SK-N-SH (cell line): ENCODE measurements at regions of chr2 and their contacts with region 1.

Region 1: DNA sequence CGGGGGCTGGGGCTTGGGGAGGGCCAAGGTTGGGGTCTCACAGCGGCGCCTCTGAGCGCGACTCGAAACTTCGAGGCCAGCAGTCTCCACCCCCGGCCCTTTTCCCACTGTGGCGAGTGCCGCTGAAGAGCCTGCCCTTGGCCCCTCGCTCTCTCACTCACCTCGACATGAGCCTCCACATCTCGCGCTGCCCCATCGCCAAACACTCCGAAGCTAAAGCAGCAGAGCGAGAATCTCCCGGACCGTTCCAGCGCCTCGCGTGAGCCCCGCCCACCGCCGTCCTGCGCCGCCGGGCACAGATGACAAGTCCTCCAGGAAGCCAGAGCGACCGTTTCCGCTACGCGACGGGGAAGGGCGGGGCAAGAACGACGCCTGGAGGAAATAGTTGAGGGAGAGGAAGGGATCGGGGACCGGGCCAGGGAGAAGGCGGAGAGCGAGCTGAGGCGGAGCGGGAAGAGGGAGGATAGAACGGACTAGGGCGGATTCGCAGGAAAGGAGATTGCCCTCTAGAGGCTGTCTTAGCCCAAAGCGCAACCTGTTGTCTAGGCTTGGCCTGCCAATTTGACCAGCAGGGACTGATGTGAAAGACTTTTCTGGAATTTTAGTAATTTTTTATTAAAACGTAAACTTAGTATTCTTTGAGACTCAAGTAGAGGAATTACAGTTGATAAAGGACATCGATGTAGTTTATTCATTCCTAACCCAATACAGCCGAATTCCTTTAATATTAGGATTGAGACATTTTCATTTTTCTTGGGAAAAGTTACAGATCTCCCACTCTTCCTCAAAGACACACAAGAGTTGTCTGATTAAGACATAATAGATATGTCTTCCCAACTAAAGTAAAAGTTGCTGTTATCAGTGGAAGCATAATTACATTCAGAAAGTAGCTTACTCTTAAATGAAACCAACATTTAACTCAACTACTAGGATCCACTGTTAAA is at the start of gene HIBCH:
- DNase-seq: peak; percentile 90
- H3K4me3 ChIP-seq: peak within 1 kb of the TSS; percentile 80 to 82
- H3K27ac ChIP-seq: peak within 1 kb of the TSS; percentile 55 to 86
- H3K4me1 ChIP-seq: peaks cover 0 to 7% of the 10 kb centered on the region in 2 experiments; a peak in 2 of 4 replicates
- H3K27me3 ChIP-seq: no peaks in the 10 kb centered on the region
- CTCF ChIP-seq: peak; percentile 87
- EP300 ChIP-seq: peak in 1 of 2 experiments; percentile 56; a peak in 2 of 4 replicates
- RAD21 ChIP-seq: peak; percentile 42
- polyA plus RNA-seq, gene HIBCH: 8.4 and 12.2 TPM in 2 replicates

Region 2: DNA sequence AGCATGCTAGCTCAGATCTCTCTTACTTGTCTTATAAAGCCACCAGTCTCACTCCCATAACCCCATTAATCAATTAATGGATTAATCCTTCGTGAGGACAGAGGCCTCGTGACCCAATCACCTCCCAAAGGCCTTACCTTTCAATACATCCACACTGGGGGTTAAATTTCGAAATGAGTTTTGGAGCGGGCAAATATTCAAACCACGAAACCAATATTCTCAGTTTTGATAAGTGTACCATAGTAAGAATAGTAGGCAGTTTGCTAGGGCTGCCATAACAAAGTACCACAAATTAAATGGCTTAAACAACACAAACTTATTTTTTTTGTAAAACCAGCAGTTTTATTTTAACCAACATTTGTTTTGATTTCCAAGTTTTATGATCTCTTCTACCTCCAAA is 15.4 kb before region 1 on chr2:
- CTCF ChIA-PET with region 1: interaction called, 15 read pairs
- POLR2A ChIA-PET with region 1: no interaction called
- DNase-seq: no peak
- H3K4me3 ChIP-seq: no peak overlapping the region
- H3K27ac ChIP-seq: no peak overlapping the region
- H3K4me1 ChIP-seq: no peaks in the 10 kb centered on the region
- H3K27me3 ChIP-seq: no peaks in the 10 kb centered on the region
- CTCF ChIP-seq: no peak
- EP300 ChIP-seq: no peak
- RAD21 ChIP-seq: no peak

Region 3: DNA sequence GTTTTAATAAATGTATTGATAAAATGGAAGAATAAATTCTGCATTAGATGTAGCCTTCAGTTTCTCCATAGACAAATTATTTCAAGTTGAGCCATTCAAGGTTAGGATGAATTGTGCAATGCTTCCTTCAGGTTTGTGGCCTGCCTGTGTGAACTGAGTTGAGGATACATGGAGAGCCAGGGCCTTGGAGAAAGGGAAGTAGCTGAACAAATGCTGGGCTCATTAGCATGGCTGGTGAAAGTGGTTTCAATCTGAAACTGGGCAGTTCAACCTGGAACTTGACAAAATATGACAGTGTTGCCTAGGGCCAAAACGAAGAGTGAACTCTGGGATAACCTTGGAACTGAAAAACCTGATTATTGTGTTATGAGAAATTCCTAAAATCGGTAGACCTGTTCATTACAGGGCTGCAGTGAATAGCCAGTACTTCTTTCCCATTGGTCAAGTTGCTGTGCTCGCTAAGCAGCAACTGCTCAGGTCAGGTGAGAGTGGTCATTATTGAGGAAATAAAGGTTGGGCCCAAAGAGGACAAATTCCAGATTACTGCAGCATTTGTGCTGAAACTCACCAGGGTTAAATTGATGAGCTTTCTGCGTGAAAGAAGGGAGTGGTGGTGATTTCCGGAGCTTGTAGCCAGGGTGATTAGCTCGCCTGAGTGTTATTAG is 36.3 kb after region 1 on chr2:
- CTCF ChIA-PET with region 1: interaction called, 10 read pairs
- POLR2A ChIA-PET with region 1: interaction called, 4 read pairs
- DNase-seq: no peak
- H3K4me3 ChIP-seq: no peak overlapping the region
- H3K27ac ChIP-seq: no peak overlapping the region
- H3K4me1 ChIP-seq: peaks cover 0 to 29% of the 10 kb centered on the region in 2 experiments; a peak in 2 of 4 replicates
- H3K27me3 ChIP-seq: no peaks in the 10 kb centered on the region
- CTCF ChIP-seq: no peak
- EP300 ChIP-seq: no peak
- RAD21 ChIP-seq: no peak

Region 4: DNA sequence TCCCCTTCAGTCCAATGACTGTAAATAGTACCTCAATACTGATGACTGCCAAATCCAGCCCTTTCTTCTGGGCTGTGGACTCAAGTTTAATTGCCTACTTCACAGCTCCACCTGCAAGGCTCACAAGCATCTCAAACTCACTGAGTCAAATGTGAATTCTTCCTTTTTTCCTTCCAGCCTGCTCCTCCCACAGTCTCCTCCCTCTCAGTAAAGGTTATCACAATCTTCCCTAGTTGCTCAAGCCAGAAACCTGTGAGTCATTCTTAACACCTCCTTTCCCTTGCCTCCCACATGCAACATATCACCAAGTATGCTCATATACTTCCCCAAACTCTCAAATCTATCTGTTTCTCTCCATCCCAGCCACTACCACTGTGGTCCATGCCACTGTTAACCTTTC is 84.7 kb after region 1 on chr2:
- CTCF ChIA-PET with region 1: no interaction called
- POLR2A ChIA-PET with region 1: no interaction called
- DNase-seq: no peak
- H3K4me3 ChIP-seq: no peak overlapping the region
- H3K27ac ChIP-seq: no peak overlapping the region
- H3K4me1 ChIP-seq: peaks cover 0 to 10% of the 10 kb centered on the region in 2 experiments; a peak in 2 of 4 replicates
- H3K27me3 ChIP-seq: no peaks in the 10 kb centered on the region
- CTCF ChIP-seq: no peak
- EP300 ChIP-seq: no peak
- RAD21 ChIP-seq: no peak